ENCODE measurements at regions of chr4 and their contacts with region 1.

Region 1: GRCh38 chr4:52983563-52984303 is 121.6 kb downstream of the RASL11B start:
- DNase-seq: no peak

Region 2: GRCh38 chr4:52234561-52235440 is 748.9 kb before region 1 on chr4:
- intact Hi-C with region 1: loop called (anchors 5 kb)
- DNase-seq: no peak

Region 3: GRCh38 chr4:52376132-52376704 is 607.5 kb before region 1 on chr4:
- intact Hi-C with region 1: loop called (anchors 1 kb)
- DNase-seq: no peak

Region 4: DNA sequence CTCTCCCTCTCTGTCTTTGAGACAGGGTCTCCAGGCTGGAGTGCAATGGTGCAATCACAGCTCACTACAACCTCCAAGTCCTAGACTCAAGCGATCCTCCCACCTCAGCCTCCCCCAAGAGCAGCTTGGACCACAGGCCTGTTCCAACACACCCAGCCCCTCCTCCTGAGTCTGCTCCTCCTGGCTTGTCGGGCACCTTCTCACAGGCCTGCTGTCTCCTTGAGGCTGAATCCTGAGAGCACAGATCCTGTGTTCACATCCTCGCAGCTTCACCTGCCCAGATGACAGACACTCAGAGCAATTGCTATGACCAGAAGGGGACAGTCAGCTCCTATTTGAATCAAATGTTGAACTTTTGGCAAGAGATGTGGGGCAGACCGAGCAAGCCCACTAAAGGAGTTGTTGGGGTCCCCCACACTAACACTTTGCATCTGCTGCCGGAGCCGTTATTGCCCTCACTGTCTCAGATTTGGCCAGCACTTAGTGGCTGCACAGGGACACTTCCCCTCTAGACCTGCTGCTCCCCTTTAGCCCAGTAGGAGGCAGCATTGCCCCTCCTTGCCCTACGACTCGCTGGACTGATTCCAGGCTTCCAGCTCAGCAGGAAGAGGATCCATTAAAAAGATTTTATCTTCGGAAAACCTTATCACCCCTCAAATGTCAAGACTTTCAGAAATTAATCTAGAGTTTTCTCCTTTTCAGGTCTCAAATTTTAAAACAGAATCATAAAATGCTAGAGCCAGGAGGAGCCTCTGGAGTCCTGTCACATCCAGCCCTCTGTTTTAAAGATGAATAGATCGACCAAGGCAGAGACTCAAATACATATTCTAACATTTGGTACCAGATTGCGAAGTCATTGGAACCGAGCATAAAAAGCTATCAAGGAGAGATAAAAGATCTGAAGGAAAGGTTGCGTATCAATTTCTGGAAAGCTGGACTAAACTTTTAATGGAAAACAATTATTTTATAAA is 438.3 kb before region 1 on chr4:
- intact Hi-C with region 1: loop called (anchors 2 kb)
- DNase-seq: peak in 6 of 10 donors; percentile 53 to 92 (median 74)

Region 5: GRCh38 chr4:52588097-52588782 is 395.5 kb before region 1 on chr4:
- intact Hi-C with region 1: loop called (anchors 2 kb)
- DNase-seq: peak in 6 of 10 donors; percentile 15 to 85 (median 42)